Activated naive CD4-positive, alpha-beta T cell treated with anti-CD3 and anti-CD28 coated beads for 36 hours (primary cell): ENCODE measurements at regions of chr6 and their contacts with region 1.

Region 1: DNA sequence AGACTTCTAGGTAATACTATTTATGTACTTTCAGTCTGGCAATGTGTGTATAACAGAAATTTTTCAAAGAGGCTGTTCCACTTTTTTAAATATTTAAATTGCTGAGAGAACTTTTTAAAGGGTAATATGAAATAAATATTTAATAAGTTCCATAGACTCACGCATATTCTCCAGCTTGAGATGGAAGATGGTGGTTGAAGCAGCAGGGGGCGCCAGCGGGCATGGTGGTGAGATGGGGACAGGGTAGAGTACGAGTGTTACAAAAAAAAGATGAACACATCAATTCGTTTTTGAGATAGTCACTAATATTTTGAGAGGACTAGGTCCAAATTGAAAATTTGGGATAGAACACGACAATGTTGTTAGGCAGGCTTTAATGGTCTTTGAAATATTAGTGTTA is 68.4 kb downstream of the RSPO3 start:
- DNase-seq: peak; percentile 85
- H3K4me3 Mint-ChIP-seq: no peak overlapping the region
- H3K27ac Mint-ChIP-seq: no peak overlapping the region
- H3K4me1 Mint-ChIP-seq: no peaks in the 10 kb centered on the region
- H3K27me3 Mint-ChIP-seq: peaks cover 10% of the 10 kb centered on the region

Region 2: GRCh38 chr6:125995972-125996580 is 1190.8 kb before region 1 on chr6:
- CTCF ChIA-PET with region 1: no interaction called
- intact Hi-C with region 1: loop called (anchors 2 kb)
- DNase-seq: peak; percentile 77
- H3K4me3 Mint-ChIP-seq: peak overlapping the region; percentile 48
- H3K27ac Mint-ChIP-seq: no peak overlapping the region
- H3K4me1 Mint-ChIP-seq: peaks cover 29% of the 10 kb centered on the region
- H3K27me3 Mint-ChIP-seq: no peaks in the 10 kb centered on the region

Region 3: GRCh38 chr6:126804332-126805064 is 382.4 kb before region 1 on chr6:
- CTCF ChIA-PET with region 1: no interaction called
- intact Hi-C with region 1: loop called (anchors 1 kb)
- DNase-seq: peak; percentile 13
- H3K4me3 Mint-ChIP-seq: no peak overlapping the region
- H3K27ac Mint-ChIP-seq: no peak overlapping the region
- H3K4me1 Mint-ChIP-seq: no peaks in the 10 kb centered on the region
- H3K27me3 Mint-ChIP-seq: no peaks in the 10 kb centered on the region

Region 4: DNA sequence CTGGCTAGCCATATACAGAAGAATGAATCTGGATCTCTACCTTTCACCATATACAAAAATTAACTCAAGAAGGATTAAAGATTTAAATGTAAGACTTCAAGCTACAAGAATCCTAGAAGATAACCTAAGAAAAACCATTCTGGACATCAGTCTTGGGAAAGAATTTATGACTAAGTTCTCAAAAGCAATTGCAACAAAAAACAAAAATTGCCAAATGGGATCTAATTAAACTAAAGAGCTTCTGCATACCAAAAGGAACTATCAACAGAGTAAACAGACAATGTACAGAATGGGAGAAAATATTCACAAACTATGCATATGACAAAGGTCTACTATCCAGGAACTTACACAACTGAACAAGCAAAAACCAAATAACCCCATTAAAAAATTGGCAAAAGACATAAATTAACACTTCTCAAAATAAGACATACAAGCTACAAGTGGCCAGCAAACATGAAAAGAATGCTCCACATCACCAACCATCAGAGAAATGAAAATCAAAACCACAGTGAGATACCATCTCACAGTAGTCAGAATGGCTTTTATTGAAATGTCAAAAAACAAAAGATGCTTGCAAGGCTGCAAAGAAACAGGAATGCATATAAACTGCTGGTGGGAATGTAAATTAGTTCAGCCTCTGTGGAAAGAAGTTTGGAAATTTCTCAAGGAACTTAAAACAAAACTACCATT is 135.2 kb before region 1 on chr6:
- CTCF ChIA-PET with region 1: no interaction called
- intact Hi-C with region 1: no loop called
- DNase-seq: no peak
- H3K4me3 Mint-ChIP-seq: no peak overlapping the region
- H3K27ac Mint-ChIP-seq: no peak overlapping the region
- H3K4me1 Mint-ChIP-seq: peaks cover 2% of the 10 kb centered on the region
- H3K27me3 Mint-ChIP-seq: no peaks in the 10 kb centered on the region

Region 5: DNA sequence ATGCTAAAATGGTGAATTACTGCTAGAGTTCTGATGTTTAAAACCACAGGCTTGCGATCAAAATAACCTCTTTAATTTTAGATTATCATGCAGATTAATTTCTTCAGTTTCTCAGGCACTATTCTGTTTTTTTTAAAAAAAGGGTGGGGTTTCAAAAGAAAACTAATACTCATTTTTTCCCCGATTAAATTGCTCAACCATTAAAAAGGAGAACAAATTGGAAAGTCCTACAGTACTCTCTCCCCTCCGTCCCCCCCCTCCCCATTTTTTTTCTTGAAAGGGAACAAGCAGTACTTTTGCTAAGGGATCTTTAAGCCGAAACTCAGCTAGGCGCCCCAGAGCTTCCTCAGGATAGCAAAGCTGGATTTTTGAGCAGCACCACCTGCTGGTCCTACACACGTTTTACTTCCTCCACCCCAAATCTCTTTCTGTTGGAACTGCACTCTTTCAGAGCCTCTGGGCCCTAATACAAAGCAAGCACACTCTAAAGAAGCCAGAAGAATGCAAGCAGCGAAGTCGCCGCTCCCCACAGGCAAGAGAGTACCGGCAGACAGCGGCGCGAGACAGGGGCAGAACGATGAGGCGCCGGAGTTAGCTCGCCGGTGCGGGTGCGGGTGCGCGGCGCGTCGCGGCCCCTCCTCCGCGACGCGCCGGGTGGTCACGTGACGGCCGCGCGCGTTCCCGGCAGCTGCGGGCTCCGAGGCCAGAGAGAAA is 79.4 kb after region 1 on chr6 and contains the start of gene RNF146:
- CTCF ChIA-PET with region 1: interaction called, 24 read pairs
- intact Hi-C with region 1: loop called (anchors 1 kb)
- DNase-seq: peak; percentile 74
- H3K4me3 Mint-ChIP-seq: peak within 1 kb of the TSS; percentile 100
- H3K27ac Mint-ChIP-seq: peak within 1 kb of the TSS; percentile 100
- H3K4me1 Mint-ChIP-seq: peaks cover 25% of the 10 kb centered on the region
- H3K27me3 Mint-ChIP-seq: no peaks in the 10 kb centered on the region
- total RNA-seq, gene RNF146: 9.7 to 10.8 TPM

Region 6: GRCh38 chr6:127464881-127465459 is 278.1 kb after region 1 on chr6:
- CTCF ChIA-PET with region 1: no interaction called
- intact Hi-C with region 1: loop called (anchors 1 kb)
- DNase-seq: peak; percentile 83
- H3K4me3 Mint-ChIP-seq: no peak overlapping the region
- H3K27ac Mint-ChIP-seq: no peak overlapping the region
- H3K4me1 Mint-ChIP-seq: no peaks in the 10 kb centered on the region
- H3K27me3 Mint-ChIP-seq: no peaks in the 10 kb centered on the region

Region 7: GRCh38 chr6:127539272-127539671 is 352.4 kb after region 1 on chr6:
- CTCF ChIA-PET with region 1: interaction called, 15 read pairs
- intact Hi-C with region 1: loop called (anchors 1 kb)
- DNase-seq: no peak
- H3K4me3 Mint-ChIP-seq: no peak overlapping the region
- H3K27ac Mint-ChIP-seq: no peak overlapping the region
- H3K4me1 Mint-ChIP-seq: no peaks in the 10 kb centered on the region
- H3K27me3 Mint-ChIP-seq: peaks cover 13% of the 10 kb centered on the region

Region 8: GRCh38 chr6:127641905-127642304 is 455.0 kb after region 1 on chr6:
- CTCF ChIA-PET with region 1: no interaction called
- intact Hi-C with region 1: loop called (anchors 10 kb)
- DNase-seq: peak; percentile 8
- H3K4me3 Mint-ChIP-seq: no peak overlapping the region
- H3K27ac Mint-ChIP-seq: no peak overlapping the region
- H3K4me1 Mint-ChIP-seq: no peaks in the 10 kb centered on the region
- H3K27me3 Mint-ChIP-seq: peaks cover 2% of the 10 kb centered on the region

Region 9: GRCh38 chr6:127748290-127748689 is 561.4 kb after region 1 on chr6:
- CTCF ChIA-PET with region 1: no interaction called
- intact Hi-C with region 1: no loop called
- DNase-seq: no peak
- H3K4me3 Mint-ChIP-seq: peak overlapping the region; percentile 62
- H3K27ac Mint-ChIP-seq: peak overlapping the region; percentile 83
- H3K4me1 Mint-ChIP-seq: peaks cover 61% of the 10 kb centered on the region
- H3K27me3 Mint-ChIP-seq: no peaks in the 10 kb centered on the region